ENCODE measurements at regions of chrX and their contacts with region 1.

Region 1: GRCh38 chrX:70554081-70554480 is 109.4 kb downstream of the DLG3 start:
- DNase-seq: peak in 1 of 2 experiments; percentile 27
- H3K4me3 ChIP-seq: no peak overlapping the region
- H3K4me3 Mint-ChIP-seq: no peak overlapping the region
- H3K27ac Mint-ChIP-seq: no peak overlapping the region
- H3K4me1 ChIP-seq: peaks cover 4% of the 10 kb centered on the region; the same call in 1 of the 2 replicates
- H3K4me1 Mint-ChIP-seq: peaks cover 14% of the 10 kb centered on the region
- H3K27me3 ChIP-seq: no peaks in the 10 kb centered on the region
- H3K27me3 Mint-ChIP-seq: no peaks in the 10 kb centered on the region
- CTCF ChIP-seq: peak in 1 of 2 experiments; percentile 28

Region 2: DNA sequence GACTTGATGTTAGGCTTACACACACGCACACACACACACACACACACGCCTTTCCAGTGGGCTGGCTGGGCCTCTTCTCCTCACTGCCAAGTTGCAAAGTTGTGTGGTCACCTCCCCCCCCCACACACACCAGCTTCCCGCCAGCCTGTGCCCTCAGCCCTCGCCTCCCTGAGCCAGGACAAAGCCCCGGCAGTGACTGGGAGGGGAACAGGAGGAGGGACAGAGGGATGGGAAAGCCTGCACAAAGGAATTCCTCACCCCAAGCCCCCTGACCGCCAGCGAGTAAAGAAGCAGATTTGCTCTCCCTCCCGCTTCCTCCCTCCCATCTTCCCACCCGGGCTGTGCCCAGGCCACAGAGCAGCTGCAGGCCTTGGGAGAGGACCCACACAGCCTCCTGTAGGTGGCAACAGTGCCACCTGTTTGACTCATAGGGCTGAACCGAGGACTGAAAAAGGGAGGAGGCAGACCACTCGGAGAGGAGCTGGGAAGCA is 131.2 kb before region 1 on chrX and contains the start of gene GDPD2:
- CTCF ChIA-PET with region 1: interaction called, 15 read pairs
- POLR2A ChIA-PET with region 1: no interaction called
- intact Hi-C with region 1: no loop called
- DNase-seq: peak; percentile 34 to 53
- H3K4me3 ChIP-seq: peak within 1 kb of the TSS; percentile 21
- H3K4me3 Mint-ChIP-seq: peak within 1 kb of the TSS; percentile 58
- H3K27ac Mint-ChIP-seq: peak within 1 kb of the TSS; percentile 78
- H3K4me1 ChIP-seq: peaks cover 22% of the 10 kb centered on the region
- H3K4me1 Mint-ChIP-seq: peaks cover 9% of the 10 kb centered on the region
- H3K27me3 ChIP-seq: no peaks in the 10 kb centered on the region
- H3K27me3 Mint-ChIP-seq: no peaks in the 10 kb centered on the region
- CTCF ChIP-seq: peak in 1 of 2 experiments; percentile 46
- total RNA-seq, gene GDPD2: 1.9 and 2.2 TPM in 2 replicates

Region 3: GRCh38 chrX:70479247-70479921 is 74.7 kb before region 1 on chrX:
- CTCF ChIA-PET with region 1: interaction called, 10 read pairs
- POLR2A ChIA-PET with region 1: no interaction called
- intact Hi-C with region 1: no loop called
- DNase-seq: no peak
- H3K4me3 ChIP-seq: no peak overlapping the region
- H3K4me3 Mint-ChIP-seq: no peak overlapping the region
- H3K27ac Mint-ChIP-seq: no peak overlapping the region
- H3K4me1 ChIP-seq: peaks cover 23% of the 10 kb centered on the region
- H3K4me1 Mint-ChIP-seq: peaks cover 8% of the 10 kb centered on the region
- H3K27me3 ChIP-seq: no peaks in the 10 kb centered on the region
- H3K27me3 Mint-ChIP-seq: no peaks in the 10 kb centered on the region
- CTCF ChIP-seq: no peak

Measured in Caco-2 (cell line).